ENCODE measurements at regions of chr15 and their contacts with region 1.

Region 1: DNA sequence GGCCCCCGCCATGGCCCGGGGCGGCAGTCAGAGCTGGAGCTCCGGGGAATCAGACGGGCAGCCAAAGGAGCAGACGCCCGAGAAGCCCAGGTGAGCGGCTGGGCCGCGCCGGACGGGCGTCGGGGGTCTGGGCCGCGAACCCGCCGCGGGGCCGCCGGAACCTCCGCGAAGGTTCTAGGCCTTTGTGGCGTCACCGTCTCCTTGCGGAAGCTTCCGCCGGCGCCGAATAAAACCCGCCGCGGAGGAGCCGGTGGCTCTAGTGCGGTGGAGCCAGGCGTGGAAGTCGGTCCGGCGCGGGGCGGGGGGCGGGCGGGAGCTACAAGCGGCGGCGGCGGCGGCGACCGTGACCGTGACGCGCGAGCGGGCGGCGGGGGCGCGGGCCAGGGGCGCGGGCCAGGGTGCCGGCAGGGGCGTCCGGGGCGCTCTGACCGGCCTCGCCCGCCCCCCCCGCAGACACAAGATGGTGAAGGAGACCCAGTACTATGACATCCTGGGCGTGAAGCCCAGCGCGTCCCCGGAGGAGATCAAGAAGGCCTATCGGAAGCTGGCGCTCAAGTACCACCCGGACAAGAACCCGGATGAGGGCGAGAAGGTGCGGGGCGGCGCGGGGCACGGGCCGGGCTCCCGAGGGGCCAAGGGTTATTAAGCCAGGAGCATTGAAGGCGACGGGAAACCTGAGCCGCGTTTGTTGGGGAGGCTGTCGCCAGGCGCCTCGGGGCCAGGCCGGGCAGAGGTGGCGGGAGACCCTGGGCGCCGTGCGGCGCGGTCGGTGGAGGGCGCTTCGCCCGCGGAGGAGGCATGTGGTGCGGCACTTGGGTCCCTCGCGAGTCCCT is at the start of gene DNAJA4:
- DNase-seq: peak; percentile 69
- ATAC-seq: peak; percentile 71
- H3K4me3 Mint-ChIP-seq: peak within 1 kb of the TSS; percentile 89
- H3K27ac Mint-ChIP-seq: peak within 1 kb of the TSS; percentile 91
- H3K4me1 Mint-ChIP-seq: peaks cover 27% of the 10 kb centered on the region
- H3K27me3 Mint-ChIP-seq: no peaks in the 10 kb centered on the region
- CTCF ChIP-seq: no peak
- total RNA-seq, gene DNAJA4: 38.1 to 38.8 TPM

Region 2: DNA sequence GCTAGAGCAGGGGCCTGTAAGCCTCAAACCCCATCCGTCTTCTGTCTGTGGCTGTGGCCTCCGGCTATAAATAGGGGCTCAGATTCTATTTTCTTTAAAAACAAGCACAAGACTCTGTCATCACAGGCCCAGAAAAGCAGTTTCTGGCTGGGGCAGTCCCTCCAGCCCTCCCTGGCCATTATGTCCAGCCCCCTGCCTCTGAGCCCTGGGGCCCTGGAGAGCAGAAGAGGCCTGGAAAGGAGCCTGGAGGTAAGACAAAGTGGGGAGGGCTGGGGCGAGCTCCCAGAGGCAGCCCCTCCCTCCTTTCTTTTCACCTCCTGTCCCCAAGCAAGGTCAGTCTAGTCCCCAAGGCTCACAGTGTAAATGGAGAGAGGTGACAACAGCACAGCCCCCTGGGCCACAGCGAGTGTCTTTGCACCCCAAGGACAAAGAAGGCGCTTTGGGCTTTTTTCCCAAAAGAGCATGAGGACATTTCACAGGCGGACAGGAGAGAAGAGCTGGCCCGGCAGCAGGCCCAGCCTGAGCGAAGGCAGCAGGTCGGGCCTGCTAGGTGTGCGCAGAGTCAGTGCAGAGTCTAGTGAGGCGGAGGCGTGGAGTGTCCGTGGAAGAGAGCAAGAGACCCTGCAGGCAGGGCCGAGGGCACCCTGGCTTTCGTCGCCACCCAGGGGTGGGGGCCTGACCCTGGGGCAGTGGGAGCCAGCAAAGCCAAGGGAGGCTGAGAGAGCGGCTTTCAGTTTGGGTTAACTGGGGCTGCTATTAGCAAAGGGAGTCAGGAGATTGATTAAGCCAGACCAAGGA is 375.3 kb before region 1 on chr15:
- CTCF ChIA-PET with region 1: no interaction called
- POLR2A ChIA-PET with region 1: no interaction called
- intact Hi-C with region 1: no loop called
- DNase-seq: no peak
- ATAC-seq: no peak
- H3K4me3 Mint-ChIP-seq: no peak overlapping the region
- H3K27ac Mint-ChIP-seq: no peak overlapping the region
- H3K4me1 Mint-ChIP-seq: no peaks in the 10 kb centered on the region
- H3K27me3 Mint-ChIP-seq: no peaks in the 10 kb centered on the region
- CTCF ChIP-seq: no peak

Region 3: DNA sequence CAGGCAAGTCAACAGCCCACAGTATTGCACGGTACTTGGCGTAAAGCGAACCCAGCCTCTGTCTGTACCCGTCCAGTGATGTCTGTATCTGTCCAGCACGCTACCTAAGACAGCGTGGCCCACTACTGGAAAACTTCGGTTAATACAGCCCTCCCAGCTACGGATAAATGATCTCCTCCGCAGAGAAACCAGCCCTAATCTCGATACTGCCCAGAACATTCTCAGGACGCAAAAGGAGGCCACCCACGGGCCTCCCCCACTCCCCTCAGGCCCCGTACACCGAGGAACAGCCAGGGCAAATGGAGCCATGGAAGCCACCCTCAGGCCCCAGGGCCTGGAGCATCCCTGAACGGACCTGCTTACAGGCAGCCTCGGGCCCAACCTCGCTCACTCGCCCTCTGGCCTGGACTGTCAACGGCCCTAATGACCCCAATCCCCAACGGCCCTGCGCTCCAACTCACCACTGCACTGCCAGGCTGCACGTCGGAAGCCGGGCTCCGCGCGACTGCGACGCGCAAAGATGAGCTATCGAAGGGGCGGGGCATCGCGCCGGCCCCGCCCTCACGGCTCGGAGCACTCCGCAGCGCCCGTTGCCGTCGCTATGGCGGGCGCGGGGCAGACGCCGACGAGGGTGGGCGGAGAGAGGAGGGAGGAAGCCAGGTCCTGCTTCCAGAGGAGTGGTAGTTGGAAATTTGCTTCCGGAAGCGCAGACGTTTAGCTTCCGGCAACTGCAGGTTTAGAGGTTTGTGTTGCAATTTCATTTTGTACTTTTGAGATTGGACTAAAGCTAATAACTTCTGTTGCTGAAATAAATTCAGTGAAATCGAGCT is 34.8 kb after region 1 on chr15 and contains the start of gene SKIC8:
- CTCF ChIA-PET with region 1: interaction called, 8 read pairs
- POLR2A ChIA-PET with region 1: interaction called, 13 read pairs
- intact Hi-C with region 1: no loop called
- DNase-seq: peak; percentile 92
- ATAC-seq: peak; percentile 97
- H3K4me3 Mint-ChIP-seq: peak within 1 kb of the TSS; percentile 96
- H3K27ac Mint-ChIP-seq: peak within 1 kb of the TSS; percentile 92
- H3K4me1 Mint-ChIP-seq: peaks cover 28% of the 10 kb centered on the region
- H3K27me3 Mint-ChIP-seq: no peaks in the 10 kb centered on the region
- CTCF ChIP-seq: no peak
- total RNA-seq, gene SKIC8: 63.0 to 64.5 TPM

Measured in activated CD8-positive, alpha-beta T cell treated with anti-CD3 and anti-CD28 coated beads for 36 hours (primary cell).